Naive thymus-derived CD4-positive, alpha-beta T cell (primary cell): ENCODE measurements at regions of chr14 and their contacts with region 1.

Region 1: DNA sequence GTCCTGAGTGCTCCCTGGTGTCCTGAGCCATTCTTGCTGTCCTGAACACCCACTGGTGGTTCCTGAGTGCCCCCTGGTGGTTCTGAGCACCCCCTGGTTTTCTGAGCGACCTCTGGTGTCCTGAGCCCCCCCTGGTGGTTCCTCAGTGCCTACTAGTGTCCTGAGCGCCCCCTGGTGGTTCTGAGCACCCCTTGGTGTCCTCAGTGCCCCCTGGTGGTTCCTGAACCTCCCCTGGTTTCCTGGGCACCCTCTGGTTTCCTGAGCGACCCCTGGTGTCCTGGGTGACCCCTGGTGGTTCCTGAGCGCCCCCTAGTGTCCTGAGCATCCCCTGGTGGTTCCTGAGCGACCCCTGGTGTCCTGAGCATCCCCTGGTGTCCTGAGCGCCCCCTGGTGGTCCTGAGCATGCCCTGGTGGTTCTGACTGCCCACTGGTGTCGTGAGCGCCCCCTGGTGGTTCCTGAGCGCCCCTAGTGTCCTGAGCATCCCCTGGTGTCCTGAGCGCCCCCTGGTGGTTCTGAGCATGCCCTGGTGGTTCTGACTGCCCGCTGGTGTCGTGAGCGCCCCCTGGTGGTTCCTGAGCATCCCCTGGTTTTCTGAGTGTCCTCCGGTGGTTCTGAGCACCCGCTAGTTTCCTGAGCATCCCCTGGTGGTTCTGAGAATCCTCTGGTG is 473.1 kb downstream of the TMEM121 start:
- DNase-seq: peak; percentile 34 to 86 (median 63)
- ATAC-seq: peak; percentile 97
- H3K4me3 ChIP-seq: no peak overlapping the region
- H3K4me3 Mint-ChIP-seq: peak overlapping the region in 5 of 10 donors; percentile 14 to 88 (median 58)
- H3K27ac ChIP-seq: no peak overlapping the region
- H3K27ac Mint-ChIP-seq: peak overlapping the region in 8 of 9 donors; percentile 59 to 92 (median 76)
- H3K4me1 ChIP-seq: peaks cover 6 to 27% of the 10 kb centered on the region in 2 donors
- H3K4me1 Mint-ChIP-seq: peaks cover 19 to 69% (median 48%) of the 10 kb centered on the region in 7 donors
- H3K27me3 ChIP-seq: no peaks in the 10 kb centered on the region
- H3K27me3 Mint-ChIP-seq: no peaks in the 10 kb centered on the region

Region 2: GRCh38 chr14:105944632-105945610 is 54.6 kb before region 1 on chr14:
- CTCF ChIA-PET with region 1: no interaction called
- POLR2A ChIA-PET with region 1: no interaction called
- intact Hi-C with region 1: loop called in 1 of 2 experiments (anchors 1 kb)
- DNase-seq: peak; percentile 38 to 83 (median 56)
- ATAC-seq: peak; percentile 85
- H3K4me3 ChIP-seq: no peak overlapping the region
- H3K4me3 Mint-ChIP-seq: peak overlapping the region in 4 of 10 donors; percentile 42 to 65 (median 52)
- H3K27ac ChIP-seq: no peak overlapping the region
- H3K27ac Mint-ChIP-seq: no peak overlapping the region
- H3K4me1 ChIP-seq: no peaks in the 10 kb centered on the region
- H3K4me1 Mint-ChIP-seq: peaks cover 11 to 20% (median 15%) of the 10 kb centered on the region in 7 donors
- H3K27me3 ChIP-seq: no peaks in the 10 kb centered on the region
- H3K27me3 Mint-ChIP-seq: peaks cover 0 to 4% (median 0%) of the 10 kb centered on the region in 5 donors

Region 3: GRCh38 chr14:105974902-105975301 is 24.6 kb before region 1 on chr14:
- CTCF ChIA-PET with region 1: interaction called, 14 read pairs
- POLR2A ChIA-PET with region 1: interaction called, 6 read pairs
- intact Hi-C with region 1: loop called (anchors 1 kb)
- DNase-seq: peak in 8 of 9 donors; percentile 31 to 59 (median 46)
- ATAC-seq: peak; percentile 73
- H3K4me3 ChIP-seq: no peak overlapping the region
- H3K4me3 Mint-ChIP-seq: peak overlapping the region in 1 of 10 donors; percentile 21
- H3K27ac ChIP-seq: no peak overlapping the region
- H3K27ac Mint-ChIP-seq: peak overlapping the region in 4 of 9 donors; percentile 12 to 76 (median 44)
- H3K4me1 ChIP-seq: peaks cover 10 to 11% of the 10 kb centered on the region in 2 donors
- H3K4me1 Mint-ChIP-seq: peaks cover 0 to 11% (median 8%) of the 10 kb centered on the region in 7 donors
- H3K27me3 ChIP-seq: peaks cover 0 to 10% of the 10 kb centered on the region in 2 donors
- H3K27me3 Mint-ChIP-seq: peaks cover 0 to 8% (median 0%) of the 10 kb centered on the region in 5 donors

Region 4: DNA sequence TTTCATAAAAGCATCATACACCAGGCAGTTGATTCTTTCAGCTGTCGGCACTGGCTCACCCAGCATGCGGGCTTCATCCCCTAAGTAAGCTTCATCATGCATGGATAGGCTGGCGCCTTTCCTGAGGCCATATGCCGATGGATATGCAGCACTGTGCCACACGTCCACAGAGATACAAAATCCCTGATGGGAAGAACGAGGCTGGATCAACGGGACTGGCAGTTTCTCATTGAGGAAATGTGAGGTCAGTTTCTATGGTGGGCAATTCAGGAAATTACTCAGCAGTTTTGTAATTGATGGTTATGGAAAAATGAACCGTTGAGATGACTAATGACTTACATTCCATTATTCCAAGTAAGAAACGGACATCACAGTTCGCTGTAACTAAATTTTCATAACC is 19.3 kb before region 1 on chr14:
- CTCF ChIA-PET with region 1: interaction called, 14 read pairs
- POLR2A ChIA-PET with region 1: interaction called, 6 read pairs
- intact Hi-C with region 1: loop called (anchors 1 kb)
- DNase-seq: no peak
- ATAC-seq: no peak
- H3K4me3 ChIP-seq: no peak overlapping the region
- H3K4me3 Mint-ChIP-seq: peak overlapping the region in 1 of 10 donors; percentile 9
- H3K27ac ChIP-seq: no peak overlapping the region
- H3K27ac Mint-ChIP-seq: peak overlapping the region in 3 of 9 donors; percentile 41 to 91 (median 88)
- H3K4me1 ChIP-seq: peaks cover 25 to 32% of the 10 kb centered on the region in 2 donors
- H3K4me1 Mint-ChIP-seq: peaks cover 25 to 57% (median 44%) of the 10 kb centered on the region in 7 donors
- H3K27me3 ChIP-seq: peaks cover 0 to 10% of the 10 kb centered on the region in 2 donors
- H3K27me3 Mint-ChIP-seq: peaks cover 0 to 3% (median 0%) of the 10 kb centered on the region in 5 donors

Region 5: GRCh38 chr14:106185837-106186233 is 186.3 kb after region 1 on chr14:
- CTCF ChIA-PET with region 1: no interaction called
- POLR2A ChIA-PET with region 1: no interaction called
- intact Hi-C with region 1: loop called in 1 of 2 experiments (anchors 10 kb)
- DNase-seq: peak; percentile 55 to 80 (median 74)
- ATAC-seq: peak; percentile 89
- H3K4me3 ChIP-seq: no peak overlapping the region
- H3K4me3 Mint-ChIP-seq: peak overlapping the region; percentile 54 to 81 (median 72)
- H3K27ac ChIP-seq: peak overlapping the region; percentile 46
- H3K27ac Mint-ChIP-seq: peak overlapping the region; percentile 59 to 96 (median 89)
- H3K4me1 ChIP-seq: peaks cover 21 to 27% of the 10 kb centered on the region in 2 donors
- H3K4me1 Mint-ChIP-seq: peaks cover 24 to 51% (median 45%) of the 10 kb centered on the region in 7 donors
- H3K27me3 ChIP-seq: no peaks in the 10 kb centered on the region
- H3K27me3 Mint-ChIP-seq: peaks cover 0 to 64% (median 0%) of the 10 kb centered on the region in 5 donors